Activated CD8-positive, alpha-beta memory T cell treated with anti-CD3 and anti-CD28 coated beads, Interleukin-2, amount 10 ng/mL, durations not matched to agents 7 days and 5 days (primary cell): ENCODE measurements at regions of chr11 and their contacts with region 1.

Region 1: GRCh38 chr11:65471410-65471762 is 27.5 kb upstream of the MALAT1 start:
- DNase-seq: no peak
- ATAC-seq: peak; percentile 2
- H3K4me3 Mint-ChIP-seq: no peak overlapping the region
- H3K27ac Mint-ChIP-seq: peak overlapping the region; percentile 91
- H3K4me1 Mint-ChIP-seq: peaks cover 31% of the 10 kb centered on the region
- H3K27me3 Mint-ChIP-seq: no peaks in the 10 kb centered on the region

Region 2: DNA sequence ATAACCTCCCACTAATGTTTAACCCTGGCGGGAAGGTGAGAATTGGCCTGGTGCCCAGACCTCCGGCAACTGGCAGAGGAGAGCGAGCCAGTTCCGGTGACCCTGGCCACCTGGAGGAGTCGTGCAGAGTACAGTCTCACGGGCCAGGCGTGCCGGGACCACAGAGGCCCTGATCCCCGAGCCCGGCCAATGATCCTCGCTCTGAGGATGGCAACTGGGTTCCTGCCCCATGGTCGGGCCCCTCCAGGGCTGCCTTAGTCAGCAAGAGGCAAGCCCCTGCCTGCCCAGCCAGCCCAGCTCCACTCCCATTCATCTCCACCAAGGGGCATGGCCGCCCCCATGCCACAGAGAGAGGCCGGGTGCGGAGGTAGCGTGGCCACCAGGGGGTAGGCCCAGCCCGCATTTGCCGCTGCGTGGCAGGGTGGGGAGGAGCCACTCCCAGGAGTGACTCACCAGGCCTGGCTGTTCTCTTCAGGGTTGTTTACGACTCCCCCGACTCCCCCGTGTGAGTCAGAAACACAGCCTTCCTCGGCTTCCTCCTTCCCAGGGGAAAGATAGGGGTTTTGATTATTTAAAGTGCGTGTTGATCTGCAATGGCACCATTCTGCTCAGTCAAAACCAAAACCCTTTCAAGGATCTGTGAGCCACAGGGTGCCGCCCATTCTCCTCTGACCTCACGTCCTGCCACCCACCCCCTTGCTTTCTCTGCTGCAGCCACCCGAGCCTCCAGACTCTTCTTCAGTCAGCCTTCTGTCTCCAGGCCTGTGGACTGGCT is 89.2 kb before region 1 on chr11 and contains the start of gene SLC25A45:
- CTCF ChIA-PET with region 1: interaction called, 12 read pairs
- DNase-seq: peak; percentile 94
- ATAC-seq: peak; percentile 84
- H3K4me3 Mint-ChIP-seq: peak within 1 kb of the TSS; percentile 80
- H3K27ac Mint-ChIP-seq: peak within 1 kb of the TSS; percentile 98
- H3K4me1 Mint-ChIP-seq: peaks cover 51% of the 10 kb centered on the region
- H3K27me3 Mint-ChIP-seq: no peaks in the 10 kb centered on the region
- total RNA-seq, gene SLC25A45: 19.4 to 25.1 TPM